Caco-2 (cell line): ENCODE measurements at regions of chr12 and their contacts with region 1.

Region 1: GRCh38 chr12:102562836-102563425 is 82.6 kb upstream of the IGF1 start:
- DNase-seq: no peak
- H3K4me3 ChIP-seq: no peak overlapping the region
- H3K4me3 Mint-ChIP-seq: no peak overlapping the region
- H3K27ac Mint-ChIP-seq: peak overlapping the region; percentile 81
- H3K4me1 ChIP-seq: peaks cover 49% of the 10 kb centered on the region
- H3K4me1 Mint-ChIP-seq: peaks cover 26% of the 10 kb centered on the region
- H3K27me3 ChIP-seq: no peaks in the 10 kb centered on the region
- H3K27me3 Mint-ChIP-seq: no peaks in the 10 kb centered on the region
- CTCF ChIP-seq: no peak

Region 2: DNA sequence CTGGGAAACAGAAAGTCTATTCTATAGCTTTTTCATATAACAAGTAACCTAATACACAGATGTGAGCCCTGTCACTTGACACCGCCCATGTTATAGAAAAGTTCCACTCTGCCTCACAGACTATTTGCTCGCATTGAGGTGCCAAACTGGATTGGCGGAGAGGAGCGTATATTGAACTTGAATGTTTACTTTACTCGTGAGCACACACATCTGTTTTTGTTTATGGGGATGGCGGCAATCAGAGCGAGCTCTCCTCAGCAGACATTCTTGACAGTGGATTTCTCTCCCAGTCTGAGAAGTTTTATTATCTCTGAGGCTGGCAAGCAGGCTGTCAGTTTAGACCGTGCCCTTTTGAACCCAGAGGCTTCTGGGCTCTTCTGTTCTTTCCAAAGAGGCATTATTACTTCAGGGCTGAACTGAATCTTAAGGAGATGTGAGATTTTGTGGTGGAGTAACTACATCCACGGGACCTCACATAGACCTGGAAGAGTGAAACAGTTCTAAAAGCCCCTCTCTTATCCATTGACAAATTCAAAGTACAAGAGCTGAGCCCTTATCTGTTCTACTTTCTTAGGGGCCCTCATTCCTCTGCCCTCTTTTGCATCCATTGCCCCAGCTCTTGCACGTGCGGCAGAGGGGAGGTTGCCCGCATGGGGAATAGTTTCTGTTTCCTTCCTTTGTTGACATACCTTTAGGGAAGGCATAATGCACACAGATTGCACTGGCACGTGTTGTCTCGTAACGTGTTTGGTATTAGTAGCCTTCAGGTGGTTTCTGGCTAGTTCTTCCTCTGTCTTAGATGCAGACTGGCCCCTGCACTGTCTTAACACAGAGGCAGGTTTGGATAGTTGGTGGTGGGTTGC is 617.3 kb before region 1 on chr12:
- CTCF ChIA-PET with region 1: no interaction called
- POLR2A ChIA-PET with region 1: no interaction called
- intact Hi-C with region 1: loop called (anchors 5 kb)
- DNase-seq: peak in 1 of 2 experiments; percentile 9
- H3K4me3 ChIP-seq: no peak overlapping the region
- H3K4me3 Mint-ChIP-seq: no peak overlapping the region
- H3K27ac Mint-ChIP-seq: no peak overlapping the region
- H3K4me1 ChIP-seq: peaks cover 25% of the 10 kb centered on the region
- H3K4me1 Mint-ChIP-seq: peaks cover 11% of the 10 kb centered on the region
- H3K27me3 ChIP-seq: no peaks in the 10 kb centered on the region
- H3K27me3 Mint-ChIP-seq: no peaks in the 10 kb centered on the region
- CTCF ChIP-seq: no peak